Caco-2 (cell line): ENCODE measurements at regions of chr18 and their contacts with region 1.

Region 1: DNA sequence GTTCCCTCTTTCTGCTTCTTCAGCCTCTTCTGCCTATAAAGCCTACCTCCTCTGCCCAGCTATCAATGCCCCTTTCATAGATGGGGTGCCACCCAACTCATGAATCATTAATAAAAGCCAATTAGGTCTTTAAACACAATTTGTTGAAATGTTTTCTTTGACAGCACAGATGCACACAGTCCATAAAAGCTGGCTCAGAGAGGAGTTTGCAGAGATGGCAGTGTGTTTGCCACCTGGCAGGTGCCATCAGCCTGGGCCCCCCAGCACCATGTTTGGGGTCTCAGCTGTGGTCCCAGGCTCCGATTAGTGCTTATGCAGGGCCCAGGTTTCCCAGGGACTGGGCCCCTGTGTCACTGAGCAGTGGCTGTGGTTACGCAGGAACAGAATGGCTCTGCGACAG is 7.9 kb upstream of the MC2R start:
- DNase-seq: no peak
- H3K4me3 ChIP-seq: no peak overlapping the region
- H3K4me3 Mint-ChIP-seq: no peak overlapping the region
- H3K27ac Mint-ChIP-seq: no peak overlapping the region
- H3K4me1 ChIP-seq: no peaks in the 10 kb centered on the region
- H3K4me1 Mint-ChIP-seq: no peaks in the 10 kb centered on the region
- H3K27me3 ChIP-seq: peaks cover 1% of the 10 kb centered on the region
- H3K27me3 Mint-ChIP-seq: peaks cover 19% of the 10 kb centered on the region
- CTCF ChIP-seq: no peak

Region 2: GRCh38 chr18:13868501-13869271 is 54.5 kb before region 1 on chr18:
- CTCF ChIA-PET with region 1: no interaction called
- POLR2A ChIA-PET with region 1: no interaction called
- intact Hi-C with region 1: loop called (anchors 10 kb)
- DNase-seq: no peak
- H3K4me3 ChIP-seq: no peak overlapping the region
- H3K4me3 Mint-ChIP-seq: no peak overlapping the region
- H3K27ac Mint-ChIP-seq: no peak overlapping the region
- H3K4me1 ChIP-seq: no peaks in the 10 kb centered on the region
- H3K4me1 Mint-ChIP-seq: no peaks in the 10 kb centered on the region
- H3K27me3 ChIP-seq: peaks cover 2% of the 10 kb centered on the region; the same call in 1 of the 2 replicates
- H3K27me3 Mint-ChIP-seq: peaks cover 2% of the 10 kb centered on the region
- CTCF ChIP-seq: no peak

Region 3: GRCh38 chr18:13900631-13901030 is 22.6 kb before region 1 on chr18:
- CTCF ChIA-PET with region 1: no interaction called
- POLR2A ChIA-PET with region 1: no interaction called
- intact Hi-C with region 1: no loop called
- DNase-seq: no peak
- H3K4me3 ChIP-seq: no peak overlapping the region
- H3K4me3 Mint-ChIP-seq: no peak overlapping the region
- H3K27ac Mint-ChIP-seq: no peak overlapping the region
- H3K4me1 ChIP-seq: no peaks in the 10 kb centered on the region
- H3K4me1 Mint-ChIP-seq: no peaks in the 10 kb centered on the region
- H3K27me3 ChIP-seq: no peaks in the 10 kb centered on the region
- H3K27me3 Mint-ChIP-seq: peaks cover 35% of the 10 kb centered on the region
- CTCF ChIP-seq: no peak

Region 4: DNA sequence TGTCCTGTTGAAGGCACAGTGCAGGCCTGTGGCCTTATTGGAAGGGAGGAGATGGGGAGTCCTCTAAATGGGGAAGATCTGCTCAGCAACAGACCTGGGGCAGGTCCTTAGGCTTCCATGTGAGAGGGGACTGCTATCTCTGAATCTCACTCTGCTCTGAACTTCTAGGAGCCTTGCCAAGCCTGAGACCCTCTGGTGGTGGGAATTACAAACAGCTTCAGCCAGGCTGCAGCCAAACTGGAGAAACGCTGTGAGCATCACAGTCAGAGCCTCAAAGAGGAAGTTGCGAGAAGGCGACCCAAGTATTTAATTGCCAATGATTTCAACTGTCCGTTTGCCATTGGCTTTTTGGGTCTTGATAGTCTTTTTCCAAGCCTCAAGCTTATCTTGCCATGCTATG is 58.9 kb after region 1 on chr18:
- CTCF ChIA-PET with region 1: no interaction called
- POLR2A ChIA-PET with region 1: no interaction called
- intact Hi-C with region 1: loop called (anchors 10 kb)
- DNase-seq: peak in 1 of 2 experiments; percentile 37
- H3K4me3 ChIP-seq: no peak overlapping the region
- H3K4me3 Mint-ChIP-seq: no peak overlapping the region
- H3K27ac Mint-ChIP-seq: no peak overlapping the region
- H3K4me1 ChIP-seq: no peaks in the 10 kb centered on the region
- H3K4me1 Mint-ChIP-seq: no peaks in the 10 kb centered on the region
- H3K27me3 ChIP-seq: no peaks in the 10 kb centered on the region
- H3K27me3 Mint-ChIP-seq: peaks cover 2% of the 10 kb centered on the region
- CTCF ChIP-seq: peak in 1 of 2 experiments; percentile 57